Ascending aorta (tissue), 2 donors: ENCODE measurements at regions of chr5 and their contacts with region 1.

Region 1: GRCh38 chr5:134411546-134412266 is at the start of gene CDKN2AIPNL:
- DNase-seq: peak; percentile 49 to 94
- H3K4me3 ChIP-seq: peak within 1 kb of the TSS; percentile 65 to 81
- H3K27ac ChIP-seq: peak within 1 kb of the TSS; percentile 66 to 72
- H3K4me1 ChIP-seq: peaks cover 2 to 22% of the 10 kb centered on the region in 2 donors
- H3K27me3 ChIP-seq: no peaks in the 10 kb centered on the region
- CTCF ChIP-seq: peak; percentile 83 to 89 (median 86)
- total RNA-seq, gene CDKN2AIPNL: 6.0 TPM

Region 2: GRCh38 chr5:134070725-134071613 is 340.7 kb before region 1 on chr5:
- intact Hi-C with region 1: no loop called
- DNase-seq: no peak
- H3K4me3 ChIP-seq: peak overlapping the region; percentile 31 to 55
- H3K27ac ChIP-seq: no peak overlapping the region
- H3K4me1 ChIP-seq: peaks cover 5% of the 10 kb centered on the region in 2 donors
- H3K27me3 ChIP-seq: no peaks in the 10 kb centered on the region
- CTCF ChIP-seq: no peak

Region 3: DNA sequence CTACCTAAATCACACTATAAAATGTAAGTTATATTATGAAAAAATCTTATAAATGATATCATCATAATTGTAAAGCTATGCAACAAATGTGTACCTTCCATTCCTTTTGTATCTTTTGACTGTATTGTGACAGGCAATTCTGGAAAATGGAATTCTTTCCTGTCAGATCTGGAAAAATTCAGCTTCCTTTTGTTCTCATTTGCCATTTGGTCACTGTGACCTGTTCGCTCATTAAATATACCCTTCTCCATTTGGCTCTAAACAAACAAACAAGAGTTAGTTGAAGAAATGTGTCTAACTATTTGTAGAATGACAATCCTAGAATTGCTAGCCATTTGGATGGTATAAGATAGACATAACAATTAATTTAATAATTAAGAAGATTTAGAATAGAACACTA is 107.4 kb before region 1 on chr5:
- intact Hi-C with region 1: loop called (anchors 10 kb)
- DNase-seq: no peak
- H3K4me3 ChIP-seq: no peak overlapping the region
- H3K27ac ChIP-seq: no peak overlapping the region
- H3K4me1 ChIP-seq: no peaks in the 10 kb centered on the region
- H3K27me3 ChIP-seq: no peaks in the 10 kb centered on the region
- CTCF ChIP-seq: no peak

Region 4: DNA sequence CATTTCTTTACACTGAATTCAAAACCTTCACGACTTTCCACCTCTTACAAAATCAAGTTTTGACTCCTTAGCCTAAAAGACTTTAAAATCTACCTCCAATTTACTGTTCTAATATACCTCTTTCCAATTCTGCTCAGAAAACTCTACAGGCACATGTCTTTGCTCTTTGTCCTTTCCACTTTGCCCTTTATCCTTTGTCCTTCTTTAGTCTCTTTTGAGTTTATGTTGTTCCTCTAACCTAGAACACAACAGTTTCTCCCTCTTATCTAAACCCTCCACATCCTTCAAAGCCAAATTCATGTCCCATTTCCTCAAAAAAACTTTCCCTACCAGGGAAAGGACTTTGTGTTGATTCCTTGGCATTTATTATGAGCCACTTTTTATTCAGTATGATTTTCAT is 46.1 kb before region 1 on chr5:
- intact Hi-C with region 1: loop called (anchors 5 kb)
- DNase-seq: no peak
- H3K4me3 ChIP-seq: no peak overlapping the region
- H3K27ac ChIP-seq: no peak overlapping the region
- H3K4me1 ChIP-seq: peaks cover 0 to 15% of the 10 kb centered on the region in 2 donors
- H3K27me3 ChIP-seq: no peaks in the 10 kb centered on the region
- CTCF ChIP-seq: no peak

Region 5: GRCh38 chr5:134465816-134466240 is 54.1 kb after region 1 on chr5:
- intact Hi-C with region 1: loop called (anchors 2 kb)
- DNase-seq: peak; percentile 52 to 94
- H3K4me3 ChIP-seq: peak overlapping the region; percentile 64 to 68
- H3K27ac ChIP-seq: peak overlapping the region; percentile 94 to 98
- H3K4me1 ChIP-seq: peaks cover 6 to 22% of the 10 kb centered on the region in 2 donors
- H3K27me3 ChIP-seq: no peaks in the 10 kb centered on the region
- CTCF ChIP-seq: no peak

Region 6: GRCh38 chr5:134577796-134578363 is 166.2 kb after region 1 on chr5:
- intact Hi-C with region 1: loop called (anchors 1 kb)
- DNase-seq: peak in 1 of 2 donors; percentile 88
- H3K4me3 ChIP-seq: no peak overlapping the region
- H3K27ac ChIP-seq: no peak overlapping the region
- H3K4me1 ChIP-seq: peaks cover 9 to 20% of the 10 kb centered on the region in 2 donors
- H3K27me3 ChIP-seq: no peaks in the 10 kb centered on the region
- CTCF ChIP-seq: peak; percentile 58 to 86 (median 80)